Activated T-helper 2 cell treated with anti-CD3 and anti-CD28 coated beads, Interferon-gamma antibody, Interleukin-2, Interleukin-4, amounts not matched to agents 10 μg/mL and 5 μg/mL and 100 μg/mL, durations not matched to agents 14 hours and 24 hours and 36 hours (primary cell): ENCODE measurements at regions of chr10 and their contacts with region 1.

Region 1: GRCh38 chr10:24603333-24603732 is 120.4 kb downstream of the ARHGAP21 start:
- DNase-seq: no peak
- H3K4me3 Mint-ChIP-seq: no peak overlapping the region
- H3K27ac Mint-ChIP-seq: peak overlapping the region; percentile 83
- H3K4me1 Mint-ChIP-seq: peaks cover 33% of the 10 kb centered on the region
- H3K27me3 Mint-ChIP-seq: no peaks in the 10 kb centered on the region

Region 2: DNA sequence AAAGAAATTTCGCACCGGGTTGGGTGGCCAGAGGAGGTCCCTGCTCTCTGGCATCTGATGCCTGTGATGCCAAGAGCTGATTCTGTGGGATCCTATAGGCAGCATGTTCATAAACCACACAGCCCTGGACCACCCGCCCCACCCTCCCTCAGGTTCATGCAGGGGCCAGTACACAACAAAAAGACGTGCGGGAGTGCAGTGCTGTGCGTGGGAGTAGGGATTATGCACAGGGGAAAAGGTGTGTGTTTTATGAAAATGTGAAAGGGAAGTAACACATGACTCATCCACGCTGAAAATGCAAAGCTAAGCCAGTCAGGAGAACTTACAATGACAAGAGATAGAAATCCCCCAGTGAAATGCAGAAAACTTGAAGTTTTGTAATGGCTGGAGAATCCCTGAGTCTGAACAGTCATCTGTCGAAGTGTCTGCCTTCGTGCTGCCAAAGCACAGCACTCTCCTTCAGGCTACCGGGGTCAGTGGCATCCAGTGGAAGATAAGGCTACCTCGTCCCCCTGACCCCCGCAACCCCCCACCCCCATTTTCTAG is 393.3 kb before region 1 on chr10:
- intact Hi-C with region 1: loop called (anchors 5 kb)
- DNase-seq: no peak
- H3K4me3 Mint-ChIP-seq: peak overlapping the region; percentile 55
- H3K27ac Mint-ChIP-seq: peak overlapping the region; percentile 69
- H3K4me1 Mint-ChIP-seq: peaks cover 24% of the 10 kb centered on the region
- H3K27me3 Mint-ChIP-seq: peaks cover 42% of the 10 kb centered on the region

Region 3: GRCh38 chr10:24617771-24618391 is 14.5 kb after region 1 on chr10:
- intact Hi-C with region 1: loop called (anchors 2 kb)
- DNase-seq: peak; percentile 14
- H3K4me3 Mint-ChIP-seq: peak overlapping the region; percentile 37
- H3K27ac Mint-ChIP-seq: peak overlapping the region; percentile 86
- H3K4me1 Mint-ChIP-seq: peaks cover 32% of the 10 kb centered on the region
- H3K27me3 Mint-ChIP-seq: no peaks in the 10 kb centered on the region

Region 4: DNA sequence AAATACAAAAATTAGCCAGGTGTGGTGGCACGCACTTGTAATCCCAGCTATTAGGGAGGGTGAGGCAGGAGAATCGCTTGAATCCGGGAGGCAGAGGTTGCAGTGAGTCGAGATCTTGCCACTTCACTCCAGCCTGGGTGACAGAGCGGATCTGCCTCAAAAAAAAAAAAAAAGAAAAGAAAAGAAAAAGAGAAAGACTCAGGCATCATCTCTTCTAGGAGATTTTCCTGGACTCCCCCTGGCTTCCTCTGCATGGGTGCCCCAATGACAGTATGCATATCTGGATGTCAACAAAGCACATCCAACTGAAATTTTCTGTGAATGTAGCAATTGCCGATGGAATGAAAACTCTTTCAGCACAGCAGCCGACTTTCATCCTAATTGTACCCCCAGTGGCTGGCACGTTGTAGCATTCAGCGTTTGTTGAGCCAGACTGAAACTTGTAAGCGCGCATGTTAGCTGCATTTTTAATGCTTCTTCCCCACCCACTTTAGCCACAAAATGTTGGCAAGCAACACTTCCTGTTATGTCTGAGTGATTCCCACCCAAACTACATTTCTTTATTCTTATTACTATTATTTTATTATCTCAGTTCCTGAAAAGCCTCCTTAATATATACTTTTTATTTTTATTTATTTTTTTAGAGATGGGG is 278.8 kb after region 1 on chr10:
- intact Hi-C with region 1: loop called (anchors 10 kb)
- DNase-seq: peak; percentile 12
- H3K4me3 Mint-ChIP-seq: no peak overlapping the region
- H3K27ac Mint-ChIP-seq: no peak overlapping the region
- H3K4me1 Mint-ChIP-seq: peaks cover 12% of the 10 kb centered on the region
- H3K27me3 Mint-ChIP-seq: no peaks in the 10 kb centered on the region